Activated naive CD8-positive, alpha-beta T cell treated with anti-CD3 and anti-CD28 coated beads, Interleukin-2, amount 10 ng/mL, durations not matched to agents 7 days and 5 days (primary cell): ENCODE measurements at regions of chr2 and their contacts with region 1.

Region 1: GRCh38 chr2:37156857-37157714 is at the start of gene EIF2AK2:
- DNase-seq: peak; percentile 87
- ATAC-seq: peak; percentile 96
- H3K4me3 Mint-ChIP-seq: peak within 1 kb of the TSS; percentile 96
- H3K27ac Mint-ChIP-seq: peak within 1 kb of the TSS; percentile 96
- H3K4me1 Mint-ChIP-seq: peaks cover 39% of the 10 kb centered on the region
- H3K27me3 Mint-ChIP-seq: no peaks in the 10 kb centered on the region
- total RNA-seq, gene EIF2AK2: 101 to 121 TPM

Region 2: GRCh38 chr2:37083873-37084794 is 73.0 kb before region 1 on chr2 and contains the starts of genes GPATCH11 and HEATR5B:
- POLR2A ChIA-PET with region 1: interaction called, 27 read pairs
- DNase-seq: peak; percentile 89
- ATAC-seq: peak; percentile 95
- H3K4me3 Mint-ChIP-seq: no peak within 1 kb of the TSS
- H3K27ac Mint-ChIP-seq: no peak within 1 kb of the TSS
- H3K4me1 Mint-ChIP-seq: peaks cover 30% of the 10 kb centered on the region
- H3K27me3 Mint-ChIP-seq: no peaks in the 10 kb centered on the region
- total RNA-seq, gene GPATCH11: 10.3 to 12.1 TPM
- total RNA-seq, gene HEATR5B: 24.0 to 24.3 TPM

Region 3: GRCh38 chr2:37125416-37125815 is 31.7 kb before region 1 on chr2:
- POLR2A ChIA-PET with region 1: no interaction called
- DNase-seq: no peak
- ATAC-seq: no peak
- H3K4me3 Mint-ChIP-seq: no peak overlapping the region
- H3K27ac Mint-ChIP-seq: no peak overlapping the region
- H3K4me1 Mint-ChIP-seq: peaks cover 5% of the 10 kb centered on the region
- H3K27me3 Mint-ChIP-seq: no peaks in the 10 kb centered on the region

Region 4: GRCh38 chr2:37180006-37180639 is 23.0 kb after region 1 on chr2:
- POLR2A ChIA-PET with region 1: no interaction called
- DNase-seq: no peak
- ATAC-seq: no peak
- H3K4me3 Mint-ChIP-seq: no peak overlapping the region
- H3K27ac Mint-ChIP-seq: no peak overlapping the region
- H3K4me1 Mint-ChIP-seq: peaks cover 2% of the 10 kb centered on the region
- H3K27me3 Mint-ChIP-seq: peaks cover 32% of the 10 kb centered on the region

Region 5: GRCh38 chr2:37196320-37197195 is 39.5 kb after region 1 on chr2 and contains the start of gene CEBPZOS:
- POLR2A ChIA-PET with region 1: interaction called, 20 read pairs
- DNase-seq: peak; percentile 92
- ATAC-seq: peak; percentile 86
- H3K4me3 Mint-ChIP-seq: peak within 1 kb of the TSS; percentile 100
- H3K27ac Mint-ChIP-seq: peak within 1 kb of the TSS; percentile 99
- H3K4me1 Mint-ChIP-seq: peaks cover 21% of the 10 kb centered on the region
- H3K27me3 Mint-ChIP-seq: no peaks in the 10 kb centered on the region
- total RNA-seq, gene CEBPZOS: 38.1 to 41.8 TPM

Region 6: DNA sequence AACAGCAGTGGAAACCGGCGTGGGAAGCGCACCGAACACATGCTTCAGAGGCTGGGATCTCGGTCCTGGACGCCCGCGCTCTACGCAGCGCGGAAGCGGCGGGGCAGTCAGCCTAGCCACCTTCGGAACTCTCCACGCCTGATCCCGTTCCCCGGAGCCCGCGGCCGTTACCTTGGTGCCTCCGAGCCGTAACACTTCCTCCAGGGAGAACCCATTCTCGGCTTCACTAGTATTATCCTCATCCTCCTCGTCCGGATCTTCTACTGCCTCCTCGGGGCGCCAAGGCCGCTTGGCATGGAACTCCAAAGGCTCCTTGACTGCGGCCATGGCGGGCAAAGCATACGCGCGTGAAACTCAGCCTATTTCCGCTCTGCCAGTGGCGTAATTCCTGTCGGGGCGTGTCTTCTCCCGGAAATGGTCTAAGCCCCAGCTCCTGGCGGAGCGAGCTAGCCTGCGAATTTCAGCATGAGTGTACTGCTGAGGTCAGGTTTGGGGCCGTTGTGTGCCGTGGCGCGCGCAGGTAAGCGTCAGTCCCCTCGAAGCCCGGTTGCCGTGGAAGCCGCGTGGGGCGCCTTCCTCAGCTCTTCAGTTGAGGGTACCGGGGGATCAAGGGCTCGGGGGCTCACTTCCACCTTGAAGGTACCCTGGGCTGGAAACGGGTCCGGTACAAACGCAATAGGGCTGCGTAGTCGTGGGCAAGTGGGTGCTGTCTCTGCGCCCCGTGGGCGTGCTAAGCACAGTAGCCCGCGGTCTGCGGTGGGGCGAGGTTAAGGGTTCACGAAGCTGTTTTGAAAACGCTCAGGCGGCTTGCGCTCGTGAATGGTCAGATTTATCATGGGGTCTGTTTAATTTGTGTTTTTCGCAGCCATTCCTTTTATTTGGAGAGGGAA is 74.4 kb after region 1 on chr2 and contains the starts of genes CEBPZ and NDUFAF7:
- POLR2A ChIA-PET with region 1: interaction called, 20 read pairs
- DNase-seq: peak; percentile 85
- ATAC-seq: peak; percentile 94
- H3K4me3 Mint-ChIP-seq: no peak within 1 kb of the TSS
- H3K27ac Mint-ChIP-seq: no peak within 1 kb of the TSS
- H3K4me1 Mint-ChIP-seq: peaks cover 20% of the 10 kb centered on the region
- H3K27me3 Mint-ChIP-seq: no peaks in the 10 kb centered on the region
- total RNA-seq, gene CEBPZ: 63.7 to 66.5 TPM
- total RNA-seq, gene NDUFAF7: 24.4 to 24.7 TPM